GM12878 (cell line): ENCODE measurements at regions of chr10 and their contacts with region 1.

Region 1: GRCh38 chr10:97445722-97446639 is at the starts of genes EXOSC1 and ZDHHC16:
- DNase-seq: peak; percentile 93
- ATAC-seq: peak; percentile 98
- H3K4me3 ChIP-seq: peak within 1 kb of the TSS; percentile 89
- H3K27ac ChIP-seq: peak within 1 kb of the TSS; percentile 53
- H3K4me1 ChIP-seq: peaks cover 8% of the 10 kb centered on the region
- H3K27me3 ChIP-seq: no peaks in the 10 kb centered on the region
- CTCF ChIP-seq: peak in 1 of 3 experiments; percentile 23; a peak in 2 of 6 replicates
- EP300 ChIP-seq: no peak
- POLR2A ChIP-seq: peak; percentile 84
- RAD21 ChIP-seq: no peak
- polyA plus RNA-seq, gene EXOSC1: 88.8 to 121 TPM
- polyA plus RNA-seq, gene ZDHHC16: 16.8 to 20.0 TPM

Region 2: GRCh38 chr10:97407211-97407951 is 38.6 kb before region 1 on chr10:
- CTCF ChIA-PET with region 1: interaction called, 18 read pairs
- POLR2A ChIA-PET with region 1: interaction called, 3 read pairs
- RAD21 ChIA-PET with region 1: interaction called, 5 read pairs
- SMC1A ChIA-PET with region 1: interaction called, 9 read pairs
- in situ Hi-C with region 1: no loop called
- intact Hi-C with region 1: loop called (anchors 1 kb)
- DNase-seq: no peak
- ATAC-seq: peak; percentile 99
- H3K4me3 ChIP-seq: no peak overlapping the region
- H3K27ac ChIP-seq: no peak overlapping the region
- H3K4me1 ChIP-seq: no peaks in the 10 kb centered on the region
- H3K27me3 ChIP-seq: no peaks in the 10 kb centered on the region
- CTCF ChIP-seq: peak; percentile 65 to 80 (median 67)
- EP300 ChIP-seq: no peak
- POLR2A ChIP-seq: no peak
- RAD21 ChIP-seq: peak; percentile 66

Region 3: GRCh38 chr10:97498076-97498840 is 52.3 kb after region 1 on chr10 and contains the start of gene MMS19:
- CTCF ChIA-PET with region 1: no interaction called
- POLR2A ChIA-PET with region 1: no interaction called
- RAD21 ChIA-PET with region 1: no interaction called
- SMC1A ChIA-PET with region 1: no interaction called
- in situ Hi-C with region 1: no loop called
- intact Hi-C with region 1: loop called (anchors 5 kb)
- DNase-seq: peak; percentile 77
- ATAC-seq: peak; percentile 93
- H3K4me3 ChIP-seq: peak within 1 kb of the TSS; percentile 90
- H3K27ac ChIP-seq: peak within 1 kb of the TSS; percentile 87
- H3K4me1 ChIP-seq: peaks cover 5% of the 10 kb centered on the region
- H3K27me3 ChIP-seq: peaks cover 6 to 14% of the 10 kb centered on the region in 2 experiments
- CTCF ChIP-seq: no peak
- EP300 ChIP-seq: no peak
- POLR2A ChIP-seq: peak; percentile 95
- RAD21 ChIP-seq: no peak
- polyA plus RNA-seq, gene MMS19: 40.2 to 74.3 TPM

Region 4: GRCh38 chr10:97518301-97519043 is 72.5 kb after region 1 on chr10:
- CTCF ChIA-PET with region 1: no interaction called
- POLR2A ChIA-PET with region 1: no interaction called
- RAD21 ChIA-PET with region 1: no interaction called
- SMC1A ChIA-PET with region 1: no interaction called
- in situ Hi-C with region 1: no loop called
- intact Hi-C with region 1: no loop called
- DNase-seq: no peak
- ATAC-seq: no peak
- H3K4me3 ChIP-seq: no peak overlapping the region
- H3K27ac ChIP-seq: no peak overlapping the region
- H3K4me1 ChIP-seq: no peaks in the 10 kb centered on the region
- H3K27me3 ChIP-seq: peaks cover 7 to 9% of the 10 kb centered on the region in 2 experiments
- CTCF ChIP-seq: no peak
- EP300 ChIP-seq: no peak
- POLR2A ChIP-seq: no peak
- RAD21 ChIP-seq: no peak